ENCODE measurements at regions of chr13 and their contacts with region 1.

Region 1: GRCh38 chr13:42354241-42355091 is 82.5 kb downstream of the AKAP11 start:
- DNase-seq: peak; percentile 26
- CTCF ChIP-seq: peak; percentile 37

Region 2: DNA sequence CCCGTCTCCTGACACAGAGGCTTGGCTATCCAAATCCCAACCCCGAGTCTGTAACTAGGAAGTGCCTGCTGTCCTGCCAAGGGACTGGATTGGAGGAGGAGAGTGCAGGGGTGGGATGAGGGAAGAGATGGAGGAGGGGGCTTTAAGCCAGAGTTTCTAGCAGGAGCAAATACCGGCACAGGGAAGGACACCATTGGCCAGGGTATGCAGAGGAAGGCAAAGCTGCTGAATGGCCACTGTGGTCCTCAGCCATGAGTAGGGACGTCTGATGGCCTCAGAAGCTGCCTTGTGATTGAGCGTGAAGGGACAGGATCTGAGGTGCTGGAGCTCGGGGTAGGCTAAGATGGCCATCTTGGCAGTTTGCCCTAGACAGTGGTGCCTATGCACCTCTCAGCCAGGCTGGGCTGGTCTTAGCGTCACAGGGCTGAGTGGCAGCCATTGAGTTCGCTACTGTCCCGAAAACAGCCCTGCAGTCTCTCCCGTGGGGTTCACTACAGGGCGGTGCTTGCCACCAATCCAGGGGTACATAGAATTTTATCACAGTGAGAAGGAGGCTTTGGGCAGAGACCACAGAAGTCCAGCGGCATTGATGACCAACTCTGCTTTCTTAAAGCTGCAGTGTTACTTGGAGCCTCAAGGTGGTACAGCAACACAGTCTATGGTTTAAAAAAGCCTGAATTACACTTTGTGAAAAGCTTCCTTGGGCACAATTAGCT is 20.7 kb before region 1 on chr13:
- CTCF ChIA-PET with region 1: interaction called, 25 read pairs
- POLR2A ChIA-PET with region 1: no interaction called
- DNase-seq: peak; percentile 60
- CTCF ChIP-seq: peak; percentile 78